Heart right ventricle (tissue), 16 donors: ENCODE measurements at regions of chr3 and their contacts with region 1.

Region 1: GRCh38 chr3:72058493-72059081 is 273.6 kb upstream of the PROK2 start:
- DNase-seq: peak; percentile 30 to 56
- ATAC-seq: peak; percentile 44 to 95 (median 84)
- H3K4me3 ChIP-seq: no peak overlapping the region
- H3K27ac ChIP-seq: no peak overlapping the region
- H3K4me1 ChIP-seq: peaks cover 0 to 9% (median 0%) of the 10 kb centered on the region in 9 donors
- H3K27me3 ChIP-seq: no peaks in the 10 kb centered on the region
- CTCF ChIP-seq: no peak

Region 2: GRCh38 chr3:72492240-72492639 is 433.7 kb after region 1 on chr3:
- intact Hi-C with region 1: loop called in 1 of 10 experiments (anchors 10 kb)
- DNase-seq: peak; percentile 51 to 57
- ATAC-seq: peak; percentile 67 to 93 (median 83)
- H3K4me3 ChIP-seq: no peak overlapping the region
- H3K27ac ChIP-seq: no peak overlapping the region
- H3K4me1 ChIP-seq: peaks cover 0 to 38% (median 10%) of the 10 kb centered on the region in 9 donors
- H3K27me3 ChIP-seq: no peaks in the 10 kb centered on the region
- CTCF ChIP-seq: no peak